ENCODE measurements at regions of chr18 and their contacts with region 1.

Region 1: GRCh38 chr18:24321071-24321470 is 76.6 kb downstream of the OSBPL1A start:
- DNase-seq: no peak
- ATAC-seq: no peak
- H3K4me3 ChIP-seq: no peak overlapping the region
- H3K27ac ChIP-seq: no peak overlapping the region
- H3K4me1 ChIP-seq: no peaks in the 10 kb centered on the region
- H3K27me3 ChIP-seq: no peaks in the 10 kb centered on the region
- CTCF ChIP-seq: no peak

Region 2: DNA sequence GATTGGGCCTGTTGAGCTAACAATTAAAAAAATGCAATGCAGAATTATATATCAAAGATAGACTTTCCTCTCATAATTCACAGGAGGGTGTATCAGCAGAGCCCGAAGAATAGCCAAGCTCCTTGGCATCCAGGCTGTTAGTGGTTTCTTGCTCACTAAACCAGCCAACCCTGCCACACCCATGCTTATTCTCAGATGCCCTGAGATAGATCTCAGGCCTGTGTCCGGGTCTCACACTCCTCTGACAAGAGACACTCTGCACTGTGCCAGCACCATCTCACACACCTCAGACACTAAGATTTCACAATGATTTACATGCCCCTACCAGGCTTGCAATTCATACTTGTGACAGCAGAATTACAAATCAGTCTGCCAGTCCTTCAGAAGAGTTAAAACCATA is 12.0 kb after region 1 on chr18:
- CTCF ChIA-PET with region 1: no interaction called
- POLR2A ChIA-PET with region 1: no interaction called
- in situ Hi-C with region 1: no loop called
- intact Hi-C with region 1: loop called (anchors 1 kb)
- DNase-seq: no peak
- ATAC-seq: no peak
- H3K4me3 ChIP-seq: no peak overlapping the region
- H3K27ac ChIP-seq: no peak overlapping the region
- H3K4me1 ChIP-seq: no peaks in the 10 kb centered on the region
- H3K27me3 ChIP-seq: no peaks in the 10 kb centered on the region
- CTCF ChIP-seq: no peak

Measured in Panc1 (cell line).